A549 (cell line): ENCODE measurements at regions of chr2 and their contacts with region 1.

Region 1: GRCh38 chr2:231463698-231464575 is at the start of gene NCL:
- DNase-seq: peak; percentile 46 to 99
- ATAC-seq: peak; percentile 86 to 95
- H3K4me3 ChIP-seq: peak within 1 kb of the TSS; percentile 93
- H3K27ac ChIP-seq: peak within 1 kb of the TSS; percentile 96 to 99
- H3K4me1 ChIP-seq: peaks cover 39% of the 10 kb centered on the region
- CTCF ChIP-seq: no peak
- EP300 ChIP-seq: no peak
- POLR2A ChIP-seq: peak; percentile 99
- RAD21 ChIP-seq: no peak
- polyA plus RNA-seq, gene NCL: 390 and 456 TPM in 2 replicates

Region 2: DNA sequence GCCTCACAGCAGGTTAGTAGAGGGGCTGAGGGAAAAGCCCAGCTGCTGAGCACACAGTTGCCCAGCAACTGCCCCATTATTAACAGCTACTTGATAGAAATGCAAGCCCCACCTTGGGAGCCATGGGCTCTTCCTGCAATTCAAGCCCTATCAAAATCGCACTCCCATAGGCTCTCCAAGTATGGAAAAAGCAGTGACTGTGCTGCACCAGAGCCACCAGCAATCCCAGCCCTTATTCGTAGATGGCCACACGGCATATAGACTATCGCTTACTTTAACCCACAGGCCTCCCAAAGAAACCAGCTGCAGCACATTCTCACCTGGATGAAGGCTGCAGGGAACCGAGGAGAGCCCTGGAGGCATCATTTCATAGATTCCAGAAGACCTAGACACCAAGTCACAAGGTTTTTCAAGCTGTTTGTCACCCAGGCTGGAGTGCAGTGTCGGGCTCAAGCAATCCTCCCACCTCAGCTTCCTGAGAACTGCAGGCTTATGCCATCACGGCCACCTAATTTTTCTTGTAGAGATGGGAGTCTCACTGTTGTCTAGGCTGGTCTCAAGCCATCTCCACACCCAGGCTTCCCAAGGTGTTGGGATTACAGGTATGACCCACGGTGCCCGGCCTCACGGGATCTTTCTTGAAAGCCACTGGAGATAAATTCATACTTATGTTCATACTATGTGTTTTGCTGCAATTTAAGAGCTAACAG is 11.0 kb before region 1 on chr2:
- CTCF ChIA-PET with region 1: interaction called, 40 read pairs
- POLR2A ChIA-PET with region 1: interaction called, 107 read pairs
- DNase-seq: peak in 1 of 2 experiments; percentile 23
- ATAC-seq: peak; percentile 13 to 38
- H3K4me3 ChIP-seq: no peak overlapping the region
- H3K27ac ChIP-seq: no peak overlapping the region
- H3K4me1 ChIP-seq: no peaks in the 10 kb centered on the region
- CTCF ChIP-seq: no peak
- EP300 ChIP-seq: no peak
- POLR2A ChIP-seq: no peak
- RAD21 ChIP-seq: no peak

Region 3: GRCh38 chr2:231475965-231476364 is 12.0 kb after region 1 on chr2:
- CTCF ChIA-PET with region 1: interaction called, 115 read pairs
- POLR2A ChIA-PET with region 1: interaction called, 48 read pairs
- DNase-seq: no peak
- ATAC-seq: no peak
- H3K4me3 ChIP-seq: no peak overlapping the region
- H3K27ac ChIP-seq: no peak overlapping the region
- H3K4me1 ChIP-seq: no peaks in the 10 kb centered on the region
- CTCF ChIP-seq: no peak
- EP300 ChIP-seq: no peak
- POLR2A ChIP-seq: no peak
- RAD21 ChIP-seq: no peak

Region 4: DNA sequence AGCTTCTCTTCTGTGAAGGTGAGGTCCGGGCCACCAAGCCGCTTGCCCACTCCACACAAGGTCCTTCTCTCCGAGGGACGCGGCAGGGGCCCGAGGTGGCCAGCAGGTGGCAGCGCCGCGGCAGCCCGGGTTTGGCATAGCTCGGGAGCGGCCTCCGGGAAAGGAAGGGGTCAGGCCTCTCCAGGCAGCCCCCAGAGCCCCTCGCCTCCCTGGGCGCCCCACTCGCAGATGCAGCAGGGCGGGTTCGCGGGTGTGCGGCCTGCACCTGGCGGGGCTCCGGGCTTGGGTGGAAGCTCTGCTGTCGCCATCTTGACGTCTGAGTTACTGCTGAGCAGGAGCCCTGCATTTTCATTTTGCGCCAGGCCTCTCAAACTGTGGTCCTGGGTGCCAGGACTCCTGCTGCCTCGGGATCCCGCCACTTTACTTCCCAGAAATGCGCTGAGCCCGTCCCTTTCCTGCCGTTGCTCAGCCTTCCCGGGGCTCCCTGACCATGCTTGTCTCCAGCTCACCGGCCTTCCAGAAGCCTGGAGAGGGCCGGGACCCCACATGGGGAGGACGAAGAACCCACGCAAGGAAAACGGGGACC is 19.0 kb after region 1 on chr2:
- CTCF ChIA-PET with region 1: interaction called, 115 read pairs
- POLR2A ChIA-PET with region 1: interaction called, 48 read pairs
- DNase-seq: peak; percentile 69 to 87
- ATAC-seq: peak; percentile 98 to 99
- H3K4me3 ChIP-seq: peak overlapping the region; percentile 27
- H3K27ac ChIP-seq: peak overlapping the region; percentile 70 to 96
- H3K4me1 ChIP-seq: peaks cover 4% of the 10 kb centered on the region; the same call in 1 of the 3 replicates
- CTCF ChIP-seq: peak; percentile 86
- EP300 ChIP-seq: no peak
- POLR2A ChIP-seq: no peak
- RAD21 ChIP-seq: peak; percentile 47 to 54

Region 5: DNA sequence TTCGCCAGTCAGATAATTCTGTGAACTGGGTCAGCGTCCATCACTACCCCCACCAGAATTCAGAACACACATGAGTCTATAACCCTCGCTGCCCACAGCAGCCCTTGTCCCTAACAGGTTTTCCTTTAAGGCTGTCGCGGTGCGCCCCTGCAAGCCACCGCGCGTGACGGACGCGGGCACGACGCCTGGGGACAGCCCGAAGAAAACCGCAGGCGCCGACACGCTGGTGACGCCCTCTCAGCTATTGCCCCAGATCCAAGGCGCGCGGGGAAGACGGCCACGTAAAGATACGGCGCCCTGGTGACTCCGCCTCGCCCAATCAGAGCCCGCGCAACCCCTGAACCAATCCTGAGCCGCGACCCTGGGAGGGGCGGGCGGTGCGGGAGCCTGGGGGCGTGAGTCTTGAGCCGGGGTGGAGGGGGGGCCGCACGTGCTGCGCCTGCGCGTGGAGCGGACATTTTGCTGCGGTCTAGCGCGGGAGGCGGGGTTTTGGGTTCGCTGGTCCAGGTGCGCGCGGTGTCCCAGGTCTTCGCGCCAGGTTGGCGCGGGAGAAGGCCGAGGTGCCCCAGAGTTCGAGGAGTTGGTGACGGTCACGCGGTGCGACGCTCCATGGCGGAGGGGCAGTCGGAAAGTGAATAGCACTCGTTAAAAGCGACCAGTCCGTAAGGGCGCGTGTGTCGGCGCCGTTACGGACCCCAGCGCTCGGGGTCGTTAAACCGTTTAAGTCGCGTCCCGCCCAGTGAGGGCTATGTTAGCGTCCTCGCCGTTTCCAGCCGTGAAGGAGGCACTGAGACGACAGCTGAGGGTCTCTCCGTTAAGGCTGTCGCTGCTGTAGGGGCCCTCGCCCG is 50.4 kb after region 1 on chr2:
- CTCF ChIA-PET with region 1: interaction called, 4 read pairs
- POLR2A ChIA-PET with region 1: interaction called, 10 read pairs
- DNase-seq: peak; percentile 98
- ATAC-seq: peak; percentile 99 to 100
- H3K4me3 ChIP-seq: peak overlapping the region; percentile 65
- H3K27ac ChIP-seq: peak overlapping the region; percentile 84 to 92
- H3K4me1 ChIP-seq: peaks cover 11% of the 10 kb centered on the region; the same call in 2 of the 3 replicates
- CTCF ChIP-seq: no peak
- EP300 ChIP-seq: no peak
- POLR2A ChIP-seq: peak; percentile 91
- RAD21 ChIP-seq: no peak

Region 6: DNA sequence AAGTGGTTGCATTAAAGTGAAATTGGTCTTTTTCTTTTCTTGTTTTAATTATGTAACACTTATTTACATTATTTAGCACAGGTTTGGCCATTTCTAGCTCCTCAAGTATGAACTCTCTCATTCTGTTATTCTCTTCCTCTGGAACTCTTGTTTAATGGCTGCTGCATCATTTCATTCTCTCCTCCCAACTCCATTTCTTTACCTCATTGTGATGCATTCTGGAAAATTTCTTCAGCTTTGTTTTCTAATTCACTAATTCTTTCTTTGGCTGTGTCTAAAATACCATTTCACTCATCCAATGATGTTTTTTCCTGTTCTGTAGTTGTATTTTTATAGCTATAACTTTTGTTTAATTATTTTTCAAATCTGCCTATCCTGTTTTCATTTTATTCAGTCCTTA is 88.8 kb after region 1 on chr2:
- CTCF ChIA-PET with region 1: no interaction called
- POLR2A ChIA-PET with region 1: no interaction called
- DNase-seq: no peak
- ATAC-seq: no peak
- H3K4me3 ChIP-seq: no peak overlapping the region
- H3K27ac ChIP-seq: no peak overlapping the region
- H3K4me1 ChIP-seq: no peaks in the 10 kb centered on the region
- CTCF ChIP-seq: no peak
- EP300 ChIP-seq: no peak
- POLR2A ChIP-seq: no peak
- RAD21 ChIP-seq: no peak

Region 7: GRCh38 chr2:231648587-231649174 is 184.7 kb after region 1 on chr2:
- CTCF ChIA-PET with region 1: no interaction called
- POLR2A ChIA-PET with region 1: no interaction called
- DNase-seq: peak; percentile 62 to 84
- ATAC-seq: peak; percentile 96 to 99
- H3K4me3 ChIP-seq: no peak overlapping the region
- H3K27ac ChIP-seq: peak overlapping the region in 1 of 2 experiments; percentile 69; a peak in 3 of 6 replicates
- H3K4me1 ChIP-seq: peaks cover 27% of the 10 kb centered on the region
- CTCF ChIP-seq: peak; percentile 80
- EP300 ChIP-seq: no peak
- POLR2A ChIP-seq: no peak
- RAD21 ChIP-seq: peak; percentile 87 to 91